ENCODE measurements at regions of chr2 and their contacts with region 1.

Region 1: GRCh38 chr2:168181825-168182224 is 65.6 kb downstream of the STK39 start:
- DNase-seq: no peak
- ATAC-seq: no peak
- H3K4me3 ChIP-seq: no peak overlapping the region
- H3K4me3 Mint-ChIP-seq: peak overlapping the region in 1 of 10 donors; percentile 31
- H3K27ac ChIP-seq: no peak overlapping the region
- H3K27ac Mint-ChIP-seq: no peak overlapping the region
- H3K4me1 ChIP-seq: peaks cover 8 to 15% of the 10 kb centered on the region in 2 donors
- H3K4me1 Mint-ChIP-seq: peaks cover 39 to 76% (median 61%) of the 10 kb centered on the region in 7 donors
- H3K27me3 ChIP-seq: no peaks in the 10 kb centered on the region
- H3K27me3 Mint-ChIP-seq: no peaks in the 10 kb centered on the region

Region 2: DNA sequence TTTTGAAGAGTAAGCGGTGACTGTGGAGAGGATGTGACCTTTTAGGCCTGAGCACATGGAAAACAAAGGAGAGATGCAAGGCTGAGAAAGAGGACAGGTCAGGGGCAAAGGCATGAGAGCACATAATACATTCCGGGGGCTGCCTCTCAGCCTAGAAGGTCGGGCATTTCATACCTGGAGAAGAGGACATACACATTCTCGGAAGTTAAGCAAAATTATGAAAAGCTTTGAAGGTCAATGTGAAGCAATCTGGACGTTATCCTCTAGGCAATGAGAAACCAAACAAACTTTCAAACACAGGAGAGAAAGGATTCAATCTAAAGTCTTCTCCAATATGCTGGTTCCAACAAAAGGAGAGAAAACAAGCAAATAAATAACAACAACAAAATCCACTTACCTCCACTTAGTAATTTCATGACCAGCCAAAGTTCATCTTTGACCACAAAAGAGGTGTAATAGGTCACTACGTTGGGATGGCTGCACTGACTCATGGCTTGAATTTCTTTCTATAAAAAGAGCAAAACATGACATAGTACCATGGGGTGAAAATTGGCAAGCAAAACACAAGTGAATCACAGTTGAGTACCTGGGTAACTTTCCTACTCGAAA is 14.8 kb before region 1 on chr2:
- CTCF ChIA-PET with region 1: no interaction called
- POLR2A ChIA-PET with region 1: no interaction called
- intact Hi-C with region 1: loop called in 1 of 2 experiments (anchors 2 kb)
- DNase-seq: no peak
- ATAC-seq: no peak
- H3K4me3 ChIP-seq: no peak overlapping the region
- H3K4me3 Mint-ChIP-seq: no peak overlapping the region
- H3K27ac ChIP-seq: no peak overlapping the region
- H3K27ac Mint-ChIP-seq: peak overlapping the region in 2 of 9 donors; percentile 4 to 9
- H3K4me1 ChIP-seq: no peaks in the 10 kb centered on the region
- H3K4me1 Mint-ChIP-seq: peaks cover 25 to 62% (median 54%) of the 10 kb centered on the region in 7 donors
- H3K27me3 ChIP-seq: no peaks in the 10 kb centered on the region
- H3K27me3 Mint-ChIP-seq: no peaks in the 10 kb centered on the region

Measured in naive thymus-derived CD4-positive, alpha-beta T cell (primary cell).